WTC11 (cell line): ENCODE measurements at regions of chr18 and their contacts with region 1.

Region 1: DNA sequence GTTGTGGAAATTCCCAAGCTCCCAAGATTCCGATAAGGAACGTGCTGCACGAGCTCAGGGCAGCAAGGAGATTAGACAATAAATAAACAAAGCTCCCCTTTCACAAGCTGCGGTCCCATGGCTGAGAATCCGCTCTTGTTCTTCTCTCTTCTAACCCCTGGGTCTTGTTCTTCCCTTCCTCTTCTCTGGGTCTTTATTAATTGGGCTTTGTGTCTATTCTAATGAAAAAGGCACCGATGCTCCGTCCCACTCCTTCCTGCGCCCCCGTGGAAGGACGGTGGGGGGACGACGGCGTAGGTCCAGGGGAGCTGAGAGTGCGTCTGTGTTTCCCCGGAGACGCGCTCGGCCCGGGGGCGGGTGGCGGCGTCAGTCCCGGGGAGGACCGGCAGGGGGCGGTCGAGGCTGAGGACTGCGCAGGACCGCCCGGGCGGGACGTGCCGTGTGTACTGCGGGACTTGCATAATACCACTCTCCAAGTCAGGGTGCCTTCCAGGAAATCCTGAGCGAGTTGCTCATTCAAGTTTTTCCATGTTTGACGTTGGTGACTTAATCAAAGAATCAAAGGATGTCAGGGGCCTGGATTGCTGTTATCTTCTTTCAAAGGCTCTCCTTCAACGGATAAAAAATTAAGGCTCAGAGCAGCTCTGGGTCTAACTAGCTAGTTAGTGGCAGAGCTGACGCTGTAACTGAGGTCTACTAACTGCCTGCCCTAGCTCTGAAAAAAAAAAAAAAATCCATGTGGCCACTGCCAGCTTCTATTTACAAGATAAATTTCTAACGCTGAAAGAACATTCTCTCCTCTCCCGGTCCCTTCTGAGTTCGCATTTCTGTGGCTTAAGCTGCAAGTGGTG is 321.4 kb downstream of the TGIF1 start:
- DNase-seq: peak; percentile 90
- ATAC-seq: peak; percentile 93
- H3K4me3 Mint-ChIP-seq: peak overlapping the region; percentile 87
- H3K27ac Mint-ChIP-seq: no peak overlapping the region; the same call in 1 of the 2 replicates
- H3K4me1 Mint-ChIP-seq: peaks cover 48% of the 10 kb centered on the region
- H3K27me3 Mint-ChIP-seq: no peaks in the 10 kb centered on the region; the same call in 1 of the 2 replicates
- CTCF ChIP-seq: peak; percentile 96

Region 2: DNA sequence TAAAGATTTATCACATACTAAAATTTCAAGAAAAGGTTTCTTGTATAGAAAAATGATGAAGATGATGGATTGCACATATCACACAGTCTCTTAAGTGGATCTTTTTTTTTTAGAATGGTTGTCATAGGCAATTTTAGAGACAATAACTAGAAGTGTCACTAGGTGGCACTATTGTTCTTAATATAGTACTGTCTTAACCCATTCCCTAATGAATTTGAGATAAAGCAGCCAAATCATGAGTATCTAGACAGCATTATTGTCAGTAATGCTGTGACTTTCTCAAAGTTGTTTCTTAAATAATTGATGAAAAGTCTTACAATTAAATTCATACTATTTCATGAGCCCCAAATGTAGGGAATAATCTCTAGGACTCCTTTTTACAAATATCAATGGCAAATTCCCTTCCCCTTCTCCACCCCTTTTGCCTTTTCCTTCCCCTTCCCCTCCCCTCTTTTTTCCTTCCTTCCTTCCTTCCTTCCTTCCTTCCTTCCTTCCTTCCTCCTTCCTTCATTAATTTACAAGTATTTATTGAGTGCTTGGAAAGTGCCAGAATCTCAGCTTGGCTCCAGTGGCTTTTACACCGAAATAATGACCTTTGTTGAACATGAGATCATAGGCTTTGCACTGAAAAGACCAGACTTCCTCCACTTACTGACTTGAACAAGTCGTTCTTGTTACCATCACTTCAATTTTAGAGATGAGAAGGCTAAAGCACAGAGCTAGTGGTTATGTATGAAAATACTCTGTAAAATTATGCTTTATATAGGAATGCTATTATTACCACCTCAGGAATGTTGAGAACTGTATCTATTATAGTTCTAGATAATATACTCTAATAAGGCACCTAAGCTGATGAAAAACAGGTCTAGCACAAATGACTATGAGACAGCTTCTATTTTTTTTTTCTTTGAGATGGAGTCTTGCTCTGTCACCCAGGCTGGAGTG is 489.6 kb before region 1 on chr18:
- CTCF ChIA-PET with region 1: interaction called, 10 read pairs
- POLR2A ChIA-PET with region 1: no interaction called
- DNase-seq: no peak
- ATAC-seq: peak; percentile 51
- H3K4me3 Mint-ChIP-seq: no peak overlapping the region
- H3K27ac Mint-ChIP-seq: no peak overlapping the region
- H3K4me1 Mint-ChIP-seq: peaks cover 52% of the 10 kb centered on the region
- H3K27me3 Mint-ChIP-seq: no peaks in the 10 kb centered on the region
- CTCF ChIP-seq: peak; percentile 62

Region 3: DNA sequence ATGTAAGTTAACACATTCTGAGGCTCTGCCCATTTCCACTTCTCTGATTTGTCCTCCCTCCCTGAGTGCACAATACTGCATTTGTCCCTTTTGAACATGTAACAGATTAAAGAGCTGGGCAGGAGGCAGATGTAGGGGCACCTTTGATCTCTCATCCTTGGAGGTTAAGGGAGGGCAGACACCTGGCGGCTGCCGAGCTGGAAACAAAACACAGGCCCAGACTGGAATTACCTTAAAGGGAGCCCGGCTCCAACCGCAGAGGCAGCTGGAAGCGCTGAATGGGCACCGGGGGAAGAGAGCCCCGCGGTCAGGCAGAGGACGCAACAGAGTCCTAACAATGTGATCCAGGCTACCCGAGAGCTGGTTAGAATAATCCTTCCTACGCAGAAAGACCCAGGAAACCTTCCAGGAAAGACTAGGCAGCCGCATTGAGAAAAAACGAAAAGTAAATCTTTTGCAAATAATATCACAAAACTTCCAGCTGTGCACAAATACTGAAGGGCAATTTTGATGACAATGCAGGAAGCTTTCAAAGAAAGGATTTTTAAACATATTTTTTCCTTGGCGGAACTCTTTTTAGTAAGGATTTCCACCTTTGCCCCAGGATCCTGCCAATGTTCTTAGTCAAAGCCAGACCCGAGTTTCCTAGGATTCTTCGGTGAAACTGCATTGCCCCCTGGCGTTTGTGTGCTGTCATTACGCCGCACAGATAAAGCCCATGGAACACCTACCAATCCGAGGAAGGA is 105.4 kb before region 1 on chr18:
- CTCF ChIA-PET with region 1: interaction called, 29 read pairs
- POLR2A ChIA-PET with region 1: no interaction called
- DNase-seq: peak; percentile 85
- ATAC-seq: peak; percentile 89
- H3K4me3 Mint-ChIP-seq: peak overlapping the region; percentile 65
- H3K27ac Mint-ChIP-seq: peak overlapping the region; percentile 98
- H3K4me1 Mint-ChIP-seq: peaks cover 27% of the 10 kb centered on the region
- H3K27me3 Mint-ChIP-seq: no peaks in the 10 kb centered on the region
- CTCF ChIP-seq: peak; percentile 94

Region 4: GRCh38 chr18:3758531-3758930 is 12.8 kb before region 1 on chr18:
- CTCF ChIA-PET with region 1: interaction called, 42 read pairs
- POLR2A ChIA-PET with region 1: no interaction called
- DNase-seq: no peak
- ATAC-seq: no peak
- H3K4me3 Mint-ChIP-seq: no peak overlapping the region
- H3K27ac Mint-ChIP-seq: no peak overlapping the region
- H3K4me1 Mint-ChIP-seq: peaks cover 11% of the 10 kb centered on the region
- H3K27me3 Mint-ChIP-seq: no peaks in the 10 kb centered on the region
- CTCF ChIP-seq: no peak

Region 5: DNA sequence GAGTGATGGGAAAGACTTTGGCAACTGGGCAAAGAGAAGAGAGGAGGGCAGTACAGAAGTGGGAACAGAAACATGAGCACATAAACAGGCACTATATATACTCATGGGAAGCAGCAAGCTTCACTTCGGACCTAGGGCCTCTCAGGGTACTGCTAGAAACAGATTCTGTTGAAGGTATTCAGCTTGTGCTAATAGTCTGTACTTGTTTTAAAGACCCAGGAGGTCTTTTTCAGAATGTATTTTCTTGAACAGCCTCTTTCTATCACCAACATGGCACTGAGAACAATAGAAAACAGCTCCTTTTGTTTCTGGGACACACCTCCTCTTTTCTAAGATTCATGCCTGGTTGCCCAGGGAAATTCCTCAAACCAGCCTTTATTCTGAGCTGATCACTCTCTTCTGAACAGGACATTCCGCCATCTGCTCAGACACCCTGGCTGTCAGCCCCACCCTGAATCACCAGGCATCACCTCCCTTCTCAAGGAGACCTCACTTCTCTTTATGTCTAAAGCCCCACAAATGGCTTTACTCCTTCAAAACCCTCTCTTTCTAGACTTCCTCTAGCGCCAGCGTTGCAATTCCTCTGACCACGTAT is 68.2 kb after region 1 on chr18:
- CTCF ChIA-PET with region 1: interaction called, 22 read pairs
- POLR2A ChIA-PET with region 1: no interaction called
- DNase-seq: no peak
- ATAC-seq: peak; percentile 57
- H3K4me3 Mint-ChIP-seq: no peak overlapping the region
- H3K27ac Mint-ChIP-seq: 0 out of 2 replicates have a peak overlapping the region, but pooled peaks have one; percentile 0
- H3K4me1 Mint-ChIP-seq: peaks cover 22% of the 10 kb centered on the region
- H3K27me3 Mint-ChIP-seq: no peaks in the 10 kb centered on the region
- CTCF ChIP-seq: no peak

Region 6: GRCh38 chr18:3869848-3870247 is 98.5 kb after region 1 on chr18:
- CTCF ChIA-PET with region 1: interaction called, 123 read pairs
- POLR2A ChIA-PET with region 1: no interaction called
- DNase-seq: no peak
- ATAC-seq: peak; percentile 71
- H3K4me3 Mint-ChIP-seq: no peak overlapping the region
- H3K27ac Mint-ChIP-seq: no peak overlapping the region
- H3K4me1 Mint-ChIP-seq: peaks cover 42% of the 10 kb centered on the region
- H3K27me3 Mint-ChIP-seq: no peaks in the 10 kb centered on the region
- CTCF ChIP-seq: 0 out of 2 replicates have a peak, but pooled peaks have one; percentile 28

Region 7: GRCh38 chr18:3995476-3996102 is 224.2 kb after region 1 on chr18:
- CTCF ChIA-PET with region 1: interaction called, 47 read pairs
- POLR2A ChIA-PET with region 1: no interaction called
- DNase-seq: peak; percentile 47
- ATAC-seq: peak; percentile 44; the same call in 1 of the 2 replicates
- H3K4me3 Mint-ChIP-seq: no peak overlapping the region
- H3K27ac Mint-ChIP-seq: no peak overlapping the region
- H3K4me1 Mint-ChIP-seq: peaks cover 13% of the 10 kb centered on the region
- H3K27me3 Mint-ChIP-seq: no peaks in the 10 kb centered on the region
- CTCF ChIP-seq: peak; percentile 72